AG04449 (cell line): ENCODE measurements at regions of chr3 and their contacts with region 1.

Region 1: DNA sequence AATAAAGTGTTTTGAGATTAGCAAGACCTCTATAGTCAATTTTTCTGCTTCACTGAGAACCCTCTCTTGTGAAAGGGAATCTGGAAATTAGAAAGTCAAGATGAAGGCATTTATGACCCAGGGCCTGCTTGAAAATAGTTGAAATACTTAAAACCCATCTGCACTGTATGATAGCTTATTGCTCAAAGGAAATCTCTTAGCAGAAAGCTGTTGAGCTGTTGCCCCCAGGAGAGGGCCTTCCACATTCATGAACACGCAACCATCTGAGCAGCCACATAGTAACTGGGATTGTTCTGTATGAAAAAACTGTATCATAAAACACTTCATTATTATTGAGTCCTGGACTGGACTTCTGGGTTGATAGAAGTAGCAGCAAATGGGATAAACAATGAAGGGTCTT is 106.4 kb upstream of the PTX3 start:
- DNase-seq: peak; percentile 41
- H3K4me3 ChIP-seq: no peak overlapping the region
- CTCF ChIP-seq: no peak

Region 2: GRCh38 chr3:157354722-157355121 is 24.5 kb after region 1 on chr3:
- CTCF ChIA-PET with region 1: interaction called, 13 read pairs
- POLR2A ChIA-PET with region 1: no interaction called
- DNase-seq: no peak
- H3K4me3 ChIP-seq: no peak overlapping the region
- CTCF ChIP-seq: peak; percentile 13

Region 3: DNA sequence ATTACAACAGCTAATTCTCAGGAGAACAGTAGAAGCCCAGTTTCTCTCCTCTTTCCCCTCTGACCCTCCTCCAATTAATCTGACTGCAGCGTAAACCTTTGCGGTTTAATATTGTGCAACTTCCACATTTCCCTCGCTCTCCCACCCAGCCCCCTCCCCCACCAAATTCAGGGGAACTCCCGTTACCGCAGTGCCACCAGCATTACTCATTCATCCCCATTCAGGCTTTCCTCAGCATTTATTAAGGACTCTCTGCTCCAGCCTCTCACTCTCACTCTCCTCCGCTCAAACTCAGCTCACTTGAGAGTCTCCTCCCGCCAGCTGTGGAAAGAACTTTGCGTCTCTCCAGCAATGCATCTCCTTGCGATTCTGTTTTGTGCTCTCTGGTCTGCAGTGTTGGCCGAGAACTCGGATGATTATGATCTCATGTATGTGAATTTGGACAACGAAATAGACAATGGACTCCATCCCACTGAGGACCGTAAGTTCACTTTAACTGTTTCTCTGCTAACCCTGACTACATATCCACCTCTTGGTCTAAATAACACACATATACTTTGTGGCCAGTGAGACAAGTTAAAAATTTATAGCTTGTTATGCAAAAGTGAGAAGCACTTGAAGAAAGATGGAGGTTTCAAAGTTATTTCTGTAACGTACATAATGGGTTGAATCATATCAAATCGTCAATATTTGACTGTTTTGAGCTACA is 106.5 kb after region 1 on chr3 and contains the start of gene PTX3:
- CTCF ChIA-PET with region 1: interaction called, 3 read pairs
- POLR2A ChIA-PET with region 1: interaction called, 10 read pairs
- DNase-seq: no peak
- H3K4me3 ChIP-seq: peak within 1 kb of the TSS; percentile 70
- CTCF ChIP-seq: no peak